AG04449 (cell line): ENCODE measurements at regions of chr4 and their contacts with region 1.

Region 1: GRCh38 chr4:114807759-114808404 is 209.3 kb downstream of the UGT8 start:
- DNase-seq: no peak
- H3K4me3 ChIP-seq: no peak overlapping the region
- CTCF ChIP-seq: peak; percentile 86

Region 2: GRCh38 chr4:114791976-114792375 is 15.9 kb before region 1 on chr4:
- CTCF ChIA-PET with region 1: interaction called, 10 read pairs
- POLR2A ChIA-PET with region 1: no interaction called
- DNase-seq: no peak
- H3K4me3 ChIP-seq: no peak overlapping the region
- CTCF ChIP-seq: no peak